ENCODE measurements at regions of chr13 and their contacts with region 1.

Region 1: DNA sequence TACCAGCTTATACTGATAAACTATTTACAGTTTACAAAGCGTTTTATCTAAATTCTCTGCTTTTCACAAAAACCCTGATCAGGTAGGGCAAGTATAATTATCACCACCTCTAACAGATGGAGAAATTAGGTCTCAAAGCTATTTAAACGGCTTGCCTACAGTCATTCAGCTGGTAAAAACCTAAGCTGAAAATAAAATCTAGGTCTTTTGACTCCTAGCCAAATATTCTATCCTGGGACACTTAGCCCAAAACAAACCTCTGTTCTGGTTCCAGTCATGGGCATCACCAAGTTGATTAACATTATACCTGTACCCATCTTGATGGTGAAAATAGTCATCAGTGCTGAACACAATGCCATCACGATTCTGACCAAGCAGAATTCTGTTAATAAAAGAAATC is 11.4 kb downstream of the N4BP2L2 start:
- DNase-seq: no peak
- H3K4me3 ChIP-seq: no peak overlapping the region
- H3K27me3 ChIP-seq: no peaks in the 10 kb centered on the region
- CTCF ChIP-seq: no peak

Region 2: DNA sequence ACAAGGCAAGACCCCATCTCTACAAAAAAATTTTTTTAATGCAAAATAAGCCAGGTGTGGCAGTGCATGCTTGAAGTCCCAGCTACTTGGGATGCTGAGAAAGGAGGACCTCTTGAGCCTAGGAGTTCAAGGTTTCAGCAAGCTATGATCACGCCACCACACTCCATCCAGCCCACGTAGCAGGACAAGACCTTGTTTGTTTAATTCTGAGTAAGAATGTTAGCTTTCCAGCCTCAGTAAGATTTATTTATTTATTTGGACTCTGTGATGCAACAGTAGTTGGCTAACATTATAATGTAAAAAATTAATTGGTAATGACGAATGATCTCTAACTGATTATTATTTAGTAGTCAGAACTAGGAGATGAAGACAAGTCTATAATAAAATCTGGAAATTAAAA is 11.9 kb before region 1 on chr13:
- CTCF ChIA-PET with region 1: interaction called, 12 read pairs
- POLR2A ChIA-PET with region 1: no interaction called
- DNase-seq: no peak
- H3K4me3 ChIP-seq: no peak overlapping the region
- H3K27me3 ChIP-seq: no peaks in the 10 kb centered on the region
- CTCF ChIP-seq: no peak

Measured in BJ (cell line).